K562 (cell line): ENCODE measurements at regions of chr19 and their contacts with region 1.

Region 1: DNA sequence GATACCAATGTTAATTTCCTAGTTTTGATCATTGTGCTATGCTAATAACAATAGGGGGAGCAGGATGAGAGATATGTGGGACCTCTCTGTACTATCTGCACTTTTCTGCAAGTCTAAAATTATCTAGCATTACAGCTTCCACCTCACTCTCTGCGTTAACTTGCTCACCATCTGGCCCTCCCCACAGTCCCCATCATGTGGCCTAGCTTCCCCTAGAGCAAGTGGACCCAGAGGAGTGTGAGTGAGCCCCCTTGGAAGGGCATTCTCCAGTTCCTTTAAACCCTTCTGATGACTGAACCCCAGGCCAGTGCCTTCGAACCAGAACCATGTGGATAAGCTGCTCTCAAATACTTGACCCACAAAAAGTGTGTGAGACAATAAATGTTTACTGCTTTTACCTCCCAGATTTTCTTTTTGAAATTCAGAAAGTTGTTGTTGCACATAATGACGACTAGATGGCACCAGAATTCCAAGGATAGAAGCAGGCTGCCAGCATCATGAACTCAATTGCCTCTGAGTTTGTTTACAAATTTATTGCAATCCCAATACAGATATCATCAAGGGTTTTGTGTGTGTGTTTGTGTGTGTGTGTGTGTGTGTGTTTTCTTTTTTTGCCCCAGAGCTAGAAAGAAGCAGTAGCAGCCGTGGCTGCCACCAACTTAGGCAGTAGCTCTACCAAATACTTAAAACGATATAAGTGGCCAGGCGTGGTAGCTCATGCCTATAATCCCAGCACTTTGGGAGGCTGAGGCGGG is 49.0 kb upstream of the ZNF780A start:
- DNase-seq: peak; percentile 35 to 56 (median 44)
- ATAC-seq: peak; percentile 52; the same call in 2 of the 3 replicates
- H3K4me3 ChIP-seq: no peak overlapping the region
- H3K27ac ChIP-seq: no peak overlapping the region
- H3K4me1 ChIP-seq: no peaks in the 10 kb centered on the region; a peak in 1 of 5 replicates
- H3K27me3 ChIP-seq: peaks cover 6 to 10% of the 10 kb centered on the region in 2 experiments
- CTCF ChIP-seq: peak; percentile 67 to 93 (median 76); a peak in 5 of 6 replicates
- EP300 ChIP-seq: no peak
- POLR2A ChIP-seq: no peak
- RAD21 ChIP-seq: peak; percentile 89 to 95

Region 2: DNA sequence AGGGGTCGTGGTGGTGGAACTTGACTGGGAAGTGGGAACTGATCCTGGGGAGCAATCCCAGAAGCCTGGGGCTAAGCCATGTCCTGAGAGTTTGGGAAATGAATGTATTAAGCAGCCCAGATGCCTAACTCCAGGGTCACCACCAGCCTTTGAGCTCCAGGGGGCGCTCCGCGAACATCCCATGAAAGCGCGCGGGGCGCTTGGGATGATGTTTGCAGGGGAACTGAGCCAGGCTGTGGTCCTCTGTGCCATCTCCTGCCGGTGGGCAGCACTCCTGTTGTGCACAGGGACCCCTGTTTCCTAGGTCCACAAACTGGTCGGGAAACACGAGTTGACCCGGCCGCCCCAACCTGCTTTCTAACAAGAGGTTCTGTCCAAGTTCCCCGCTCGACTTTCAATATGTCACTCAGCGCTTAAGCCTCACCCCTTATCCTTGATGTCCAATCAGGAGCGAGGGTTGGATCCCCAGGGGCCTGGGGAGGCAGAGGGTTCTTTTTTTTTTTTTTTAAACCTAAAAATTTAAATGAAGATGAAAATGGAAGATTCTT is 346.6 kb before region 1 on chr19:
- CTCF ChIA-PET with region 1: interaction called, 3 read pairs
- POLR2A ChIA-PET with region 1: no interaction called
- in situ Hi-C with region 1: no loop called
- intact Hi-C with region 1: loop called (anchors 5 kb)
- DNase-seq: peak; percentile 82 to 96 (median 90)
- ATAC-seq: peak; percentile 98
- H3K4me3 ChIP-seq: 0 out of 2 replicates have a peak overlapping the region, but pooled peaks have one; percentile 3
- H3K27ac ChIP-seq: no peak overlapping the region
- H3K4me1 ChIP-seq: peaks cover 0 to 3% of the 10 kb centered on the region in 2 experiments; a peak in 1 of 5 replicates
- H3K27me3 ChIP-seq: peaks cover 0 to 12% of the 10 kb centered on the region in 2 experiments; a peak in 4 of 5 replicates
- CTCF ChIP-seq: peak; percentile 88 to 91 (median 89)
- EP300 ChIP-seq: no peak
- POLR2A ChIP-seq: no peak
- RAD21 ChIP-seq: peak; percentile 65 to 95

Region 3: GRCh38 chr19:40078377-40078776 is 61.3 kb before region 1 on chr19:
- CTCF ChIA-PET with region 1: no interaction called
- POLR2A ChIA-PET with region 1: no interaction called
- in situ Hi-C with region 1: no loop called
- intact Hi-C with region 1: no loop called
- DNase-seq: no peak
- ATAC-seq: no peak
- H3K4me3 ChIP-seq: no peak overlapping the region
- H3K27ac ChIP-seq: no peak overlapping the region
- H3K4me1 ChIP-seq: no peaks in the 10 kb centered on the region
- H3K27me3 ChIP-seq: no peaks in the 10 kb centered on the region
- CTCF ChIP-seq: no peak
- EP300 ChIP-seq: no peak
- POLR2A ChIP-seq: no peak
- RAD21 ChIP-seq: no peak

Region 4: GRCh38 chr19:40365613-40366401 is 226.1 kb after region 1 on chr19:
- CTCF ChIA-PET with region 1: no interaction called
- POLR2A ChIA-PET with region 1: no interaction called
- in situ Hi-C with region 1: no loop called
- intact Hi-C with region 1: loop called (anchors 10 kb)
- DNase-seq: peak; percentile 92 to 98 (median 98)
- ATAC-seq: peak; percentile 97
- H3K4me3 ChIP-seq: peak overlapping the region; percentile 43
- H3K27ac ChIP-seq: peak overlapping the region; percentile 79
- H3K4me1 ChIP-seq: peaks cover 41 to 49% of the 10 kb centered on the region in 2 experiments
- H3K27me3 ChIP-seq: no peaks in the 10 kb centered on the region
- CTCF ChIP-seq: no peak
- EP300 ChIP-seq: no peak
- POLR2A ChIP-seq: peak; percentile 77
- RAD21 ChIP-seq: no peak